SK-N-SH (cell line): ENCODE measurements at regions of chr1 and their contacts with region 1.

Region 1: DNA sequence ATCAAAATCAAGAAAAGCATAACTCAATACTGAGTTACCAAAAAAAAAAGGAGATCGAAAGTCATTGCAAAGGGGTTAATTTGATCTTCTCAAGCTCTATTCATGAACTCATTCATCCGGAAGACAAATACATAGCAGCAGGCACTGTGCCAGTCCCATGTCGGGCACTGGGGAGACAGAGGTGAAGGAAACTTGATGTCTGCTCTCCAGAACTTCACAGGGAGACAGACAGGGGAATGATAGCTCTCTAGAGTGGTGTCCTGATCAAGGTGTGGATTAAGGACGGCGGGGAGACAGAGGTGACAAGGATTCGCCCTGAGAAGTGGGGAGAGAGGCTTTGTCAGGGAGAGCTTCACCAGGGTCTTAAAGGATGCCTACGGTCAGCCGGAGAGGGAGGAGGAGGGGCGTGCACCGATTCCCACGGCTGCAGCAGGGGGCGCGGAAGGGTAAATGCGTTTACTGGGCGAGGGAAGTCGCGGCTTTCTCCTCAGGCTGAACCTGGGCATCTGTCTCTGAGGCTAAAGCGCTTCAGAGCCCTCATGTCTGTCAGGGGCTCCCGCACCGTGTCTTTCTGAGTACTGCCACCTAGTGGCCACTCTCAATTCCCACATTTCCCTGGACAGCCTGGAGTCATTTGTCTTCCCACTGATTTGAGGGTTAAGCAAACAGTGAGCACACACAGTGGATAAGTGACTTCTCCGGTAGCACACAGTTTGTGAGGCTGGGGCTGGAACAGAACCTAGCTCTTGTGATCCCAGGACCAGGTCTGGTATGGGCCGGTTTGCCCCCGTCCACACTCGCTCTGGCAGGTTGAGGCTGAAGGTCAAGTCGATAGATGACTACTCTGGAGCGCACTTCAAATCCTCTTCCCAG is 152.8 kb downstream of the TENT5C start:
- DNase-seq: peak; percentile 78
- H3K4me3 ChIP-seq: peak overlapping the region; percentile 46 to 53
- H3K27ac ChIP-seq: no peak overlapping the region; a peak in 1 of 4 replicates
- H3K4me1 ChIP-seq: peaks cover 0 to 12% of the 10 kb centered on the region in 2 experiments; a peak in 1 of 4 replicates
- H3K27me3 ChIP-seq: no peaks in the 10 kb centered on the region
- CTCF ChIP-seq: peak; percentile 86
- EP300 ChIP-seq: no peak
- RAD21 ChIP-seq: peak; percentile 83

Region 2: GRCh38 chr1:117512743-117513321 is 245.8 kb before region 1 on chr1:
- CTCF ChIA-PET with region 1: interaction called, 123 read pairs
- POLR2A ChIA-PET with region 1: no interaction called
- DNase-seq: no peak
- H3K4me3 ChIP-seq: no peak overlapping the region; a peak in 1 of 4 replicates
- H3K27ac ChIP-seq: no peak overlapping the region
- H3K4me1 ChIP-seq: no peaks in the 10 kb centered on the region
- H3K27me3 ChIP-seq: no peaks in the 10 kb centered on the region
- CTCF ChIP-seq: peak; percentile 82
- EP300 ChIP-seq: no peak
- RAD21 ChIP-seq: peak; percentile 82

Region 3: GRCh38 chr1:117541003-117541402 is 217.7 kb before region 1 on chr1:
- CTCF ChIA-PET with region 1: interaction called, 192 read pairs
- POLR2A ChIA-PET with region 1: no interaction called
- DNase-seq: no peak
- H3K4me3 ChIP-seq: no peak overlapping the region
- H3K27ac ChIP-seq: no peak overlapping the region
- H3K4me1 ChIP-seq: peaks cover 0 to 6% of the 10 kb centered on the region in 2 experiments; a peak in 1 of 4 replicates
- H3K27me3 ChIP-seq: no peaks in the 10 kb centered on the region
- CTCF ChIP-seq: no peak
- EP300 ChIP-seq: no peak
- RAD21 ChIP-seq: no peak

Region 4: DNA sequence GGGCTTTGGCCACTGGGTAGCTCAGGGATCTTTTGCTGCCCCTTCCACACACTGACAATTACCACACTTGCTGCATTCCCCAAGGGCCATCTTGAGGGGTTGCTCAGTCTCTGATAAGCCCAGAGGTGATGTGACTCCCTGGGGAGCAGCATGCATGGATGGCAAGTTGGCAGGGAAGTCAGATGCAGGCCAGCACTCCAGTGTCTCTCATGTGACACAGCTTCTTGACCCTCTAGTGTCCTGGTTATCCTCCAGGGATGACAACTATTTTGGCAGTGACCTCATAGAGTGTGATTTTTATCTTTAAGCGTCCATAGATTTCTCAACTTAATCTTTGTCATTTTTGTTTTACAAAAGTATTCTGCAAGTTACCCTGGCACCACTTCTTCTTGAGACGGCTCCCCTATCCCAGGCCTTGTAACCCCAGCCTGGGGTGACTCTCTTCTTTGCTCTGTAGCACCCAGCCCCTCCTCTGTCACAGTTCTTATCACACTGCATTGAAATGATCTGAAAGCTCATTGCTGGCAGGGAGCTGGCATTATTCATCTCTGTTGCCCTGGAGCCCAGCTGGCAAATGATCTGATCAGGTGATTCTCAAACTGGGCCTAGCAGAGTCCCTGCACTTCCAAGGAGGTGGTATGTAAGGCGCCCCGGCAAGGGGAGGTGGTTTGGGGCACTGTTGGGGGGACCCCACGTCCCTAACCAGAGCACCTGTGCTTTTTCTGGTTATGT is 80.3 kb before region 1 on chr1:
- CTCF ChIA-PET with region 1: interaction called, 27 read pairs
- POLR2A ChIA-PET with region 1: no interaction called
- DNase-seq: peak; percentile 74
- H3K4me3 ChIP-seq: no peak overlapping the region
- H3K27ac ChIP-seq: peak overlapping the region; percentile 60 to 69
- H3K4me1 ChIP-seq: peaks cover 4 to 29% of the 10 kb centered on the region in 2 experiments
- H3K27me3 ChIP-seq: no peaks in the 10 kb centered on the region
- CTCF ChIP-seq: no peak
- EP300 ChIP-seq: peak in 1 of 2 experiments; percentile 68; a peak in 1 of 4 replicates
- RAD21 ChIP-seq: no peak; the same call in 1 of the 2 replicates

Region 5: DNA sequence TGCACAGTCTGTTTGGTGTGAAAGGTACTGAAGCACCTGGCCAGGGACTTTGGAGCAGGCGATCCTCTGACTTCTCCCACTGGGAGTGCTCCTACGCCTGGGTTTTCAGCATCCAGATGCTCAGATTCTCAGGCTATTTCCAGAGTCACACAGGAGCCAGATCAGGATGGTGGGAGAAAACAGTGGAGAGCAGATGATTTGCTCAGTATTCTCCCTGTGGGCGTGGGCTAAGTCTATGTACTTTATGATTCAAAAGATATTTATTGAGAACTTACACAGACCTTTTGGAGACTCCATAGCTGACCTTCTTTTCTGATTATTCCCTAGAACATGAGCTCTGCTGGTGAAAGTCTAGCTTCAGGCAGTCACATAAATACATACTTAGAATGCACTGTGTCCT is 18.2 kb before region 1 on chr1:
- CTCF ChIA-PET with region 1: interaction called, 14 read pairs
- POLR2A ChIA-PET with region 1: no interaction called
- DNase-seq: no peak
- H3K4me3 ChIP-seq: no peak overlapping the region
- H3K27ac ChIP-seq: no peak overlapping the region
- H3K4me1 ChIP-seq: no peaks in the 10 kb centered on the region
- H3K27me3 ChIP-seq: no peaks in the 10 kb centered on the region; the same call in 1 of the 2 replicates
- CTCF ChIP-seq: no peak
- EP300 ChIP-seq: no peak
- RAD21 ChIP-seq: no peak

Region 6: DNA sequence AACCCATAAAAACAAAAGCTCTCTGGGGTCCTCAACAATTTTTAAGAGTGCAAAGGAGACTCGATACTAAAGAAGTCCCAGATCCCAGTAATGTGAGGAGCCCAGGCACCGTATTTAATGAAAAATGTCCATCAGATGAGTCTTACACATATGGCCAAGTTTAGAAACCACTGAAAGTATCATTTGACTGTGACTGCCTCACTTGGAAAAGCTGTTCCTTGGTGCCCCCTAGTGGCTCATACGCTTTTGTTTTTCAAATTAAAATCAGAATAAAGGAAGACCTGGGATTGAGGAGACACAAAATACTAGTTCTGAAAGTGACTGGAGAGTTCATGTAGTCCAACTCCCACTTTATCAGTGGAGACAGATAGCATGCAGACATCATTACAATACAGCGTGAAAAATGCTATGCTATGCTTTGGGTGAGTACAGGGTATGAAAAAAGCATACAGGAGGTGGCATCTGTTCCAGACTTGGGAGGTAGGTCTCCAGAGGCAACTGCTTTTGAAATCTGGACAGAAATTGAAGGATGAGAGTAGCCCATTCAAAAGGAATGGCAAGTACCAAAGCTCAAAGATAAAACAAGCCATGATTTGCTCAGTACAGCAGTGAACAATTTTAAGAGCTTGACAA is 136.9 kb after region 1 on chr1:
- CTCF ChIA-PET with region 1: interaction called, 51 read pairs
- POLR2A ChIA-PET with region 1: no interaction called
- DNase-seq: peak; percentile 34
- H3K4me3 ChIP-seq: no peak overlapping the region
- H3K27ac ChIP-seq: peak overlapping the region in 1 of 2 experiments; percentile 29; a peak in 1 of 4 replicates
- H3K4me1 ChIP-seq: no peaks in the 10 kb centered on the region; a peak in 2 of 4 replicates
- H3K27me3 ChIP-seq: no peaks in the 10 kb centered on the region
- CTCF ChIP-seq: peak; percentile 85
- EP300 ChIP-seq: no peak
- RAD21 ChIP-seq: peak; percentile 89

Region 7: GRCh38 chr1:118132000-118132399 is 373.3 kb after region 1 on chr1:
- CTCF ChIA-PET with region 1: no interaction called
- POLR2A ChIA-PET with region 1: no interaction called
- DNase-seq: no peak
- H3K4me3 ChIP-seq: no peak overlapping the region
- H3K27ac ChIP-seq: no peak overlapping the region
- H3K4me1 ChIP-seq: no peaks in the 10 kb centered on the region
- H3K27me3 ChIP-seq: no peaks in the 10 kb centered on the region; the same call in 1 of the 2 replicates
- CTCF ChIP-seq: no peak
- EP300 ChIP-seq: no peak
- RAD21 ChIP-seq: no peak